ENCODE measurements at regions of chr6 and their contacts with region 1.

Region 1: DNA sequence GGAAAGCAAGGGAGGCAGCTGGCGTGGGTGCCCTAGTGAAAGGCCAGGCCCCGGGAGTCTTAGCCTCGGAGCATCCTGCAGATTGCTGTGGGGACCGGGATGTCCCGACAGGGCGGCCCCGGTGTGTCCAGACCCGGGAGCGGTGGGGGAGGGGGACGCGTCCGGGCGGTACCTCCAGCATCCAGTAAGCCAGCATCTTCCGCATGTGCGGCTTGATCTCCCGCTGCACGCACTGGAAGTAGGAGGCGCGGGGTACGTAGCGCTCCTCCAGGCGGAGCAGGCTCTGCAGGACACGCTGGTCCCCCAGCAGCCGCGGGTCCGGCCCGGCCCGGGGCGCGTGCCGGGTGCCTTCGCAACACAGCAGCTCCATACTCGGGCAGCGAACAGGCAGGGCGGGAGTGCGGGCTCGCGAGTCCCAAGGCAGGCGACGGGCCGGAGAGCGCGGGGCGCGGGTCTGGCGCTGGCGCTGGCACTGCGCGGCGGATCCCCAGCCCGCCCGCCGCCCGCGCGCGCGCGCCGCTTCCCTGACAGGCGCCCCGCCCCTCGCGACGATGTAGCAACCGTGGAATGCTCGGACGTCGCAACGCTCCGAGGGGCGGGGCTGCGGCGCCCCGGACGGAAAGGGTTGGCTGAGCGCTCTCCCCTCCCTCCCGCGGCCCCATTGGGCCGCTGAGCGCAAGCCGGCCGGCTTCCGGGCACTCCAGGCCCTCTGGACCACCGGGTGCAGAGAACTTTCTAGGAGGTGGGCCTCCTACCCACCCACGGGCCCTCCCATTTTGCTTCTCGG is at the start of gene CCND3:
- DNase-seq: peak; percentile 85
- ATAC-seq: peak; percentile 86
- H3K4me3 ChIP-seq: peak within 1 kb of the TSS; percentile 74 to 91 (median 75)
- H3K27ac ChIP-seq: no peak within 1 kb of the TSS
- H3K4me1 ChIP-seq: peaks cover 31% of the 10 kb centered on the region
- H3K27me3 ChIP-seq: no peaks in the 10 kb centered on the region
- CTCF ChIP-seq: no peak
- EP300 ChIP-seq: 0 out of 4 replicates have a peak, but pooled peaks of 1 of the 2 experiments have one; percentile 34
- POLR2A ChIP-seq: peak; percentile 49 to 50; a peak in 3 of 4 replicates
- RAD21 ChIP-seq: no peak
- total RNA-seq, gene CCND3: 6.9 and 7.2 TPM in 2 replicates

Region 2: GRCh38 chr6:41966961-41967311 is 25.5 kb after region 1 on chr6:
- CTCF ChIA-PET with region 1: no interaction called
- POLR2A ChIA-PET with region 1: no interaction called
- in situ Hi-C with region 1: no loop called
- intact Hi-C with region 1: loop called (anchors 2 kb)
- DNase-seq: peak; percentile 84
- ATAC-seq: peak; percentile 17; the same call in 1 of the 3 replicates
- H3K4me3 ChIP-seq: no peak overlapping the region
- H3K27ac ChIP-seq: no peak overlapping the region
- H3K4me1 ChIP-seq: peaks cover 45% of the 10 kb centered on the region
- H3K27me3 ChIP-seq: no peaks in the 10 kb centered on the region
- CTCF ChIP-seq: no peak
- EP300 ChIP-seq: no peak
- POLR2A ChIP-seq: no peak
- RAD21 ChIP-seq: no peak

Region 3: GRCh38 chr6:42136508-42137193 is 195.2 kb after region 1 on chr6:
- CTCF ChIA-PET with region 1: no interaction called
- POLR2A ChIA-PET with region 1: no interaction called
- in situ Hi-C with region 1: no loop called
- intact Hi-C with region 1: no loop called
- DNase-seq: peak; percentile 61
- ATAC-seq: peak; percentile 59
- H3K4me3 ChIP-seq: peak overlapping the region; percentile 24 to 64 (median 52)
- H3K27ac ChIP-seq: peak overlapping the region; percentile 60
- H3K4me1 ChIP-seq: peaks cover 75% of the 10 kb centered on the region
- H3K27me3 ChIP-seq: no peaks in the 10 kb centered on the region; a peak in 1 of 5 replicates
- CTCF ChIP-seq: peak; percentile 68
- EP300 ChIP-seq: peak in 1 of 2 experiments; percentile 58; a peak in 1 of 4 replicates
- POLR2A ChIP-seq: no peak
- RAD21 ChIP-seq: no peak

Region 4: DNA sequence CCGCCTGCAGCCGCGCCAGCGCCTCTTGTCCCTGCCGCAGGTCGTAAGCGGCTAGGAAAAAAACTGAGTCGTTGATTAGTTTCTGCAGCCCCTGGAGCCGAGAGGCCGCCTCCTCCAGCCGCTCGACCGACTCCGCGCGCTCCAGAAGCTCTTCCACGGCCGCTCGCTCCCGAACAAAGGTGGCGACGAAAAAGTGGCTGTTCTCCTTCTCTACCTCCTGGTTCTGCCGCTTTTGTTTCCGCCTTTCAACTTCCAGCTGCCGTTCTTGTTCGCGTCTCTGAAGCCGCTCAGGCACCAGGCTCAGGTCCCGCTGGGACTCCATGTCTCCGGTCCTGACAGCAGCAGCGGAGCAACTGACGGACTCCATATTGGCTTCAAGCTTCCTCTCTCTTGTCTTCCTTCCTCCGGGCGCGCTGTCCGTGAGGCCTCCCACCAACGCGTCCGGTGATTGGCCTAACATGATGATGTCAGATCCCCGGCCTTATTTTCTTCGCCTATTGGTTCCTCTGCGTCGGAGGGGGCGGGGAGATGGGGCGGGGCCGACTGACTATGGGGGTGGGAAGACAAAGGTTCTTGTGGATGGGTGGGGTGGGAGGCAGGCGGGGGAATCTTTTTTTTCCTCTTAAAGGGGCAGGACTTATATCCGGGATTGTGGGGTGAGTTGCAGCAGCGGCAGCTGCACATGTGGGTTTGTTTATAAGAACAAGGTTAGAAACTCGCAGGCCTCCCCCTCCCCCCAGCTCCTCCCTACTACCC is 804.4 kb after region 1 on chr6 and contains the start of gene TBCC:
- CTCF ChIA-PET with region 1: no interaction called
- POLR2A ChIA-PET with region 1: no interaction called
- in situ Hi-C with region 1: no loop called
- intact Hi-C with region 1: no loop called
- DNase-seq: peak; percentile 99
- ATAC-seq: peak; percentile 87
- H3K4me3 ChIP-seq: peak within 1 kb of the TSS; percentile 93 to 100 (median 99)
- H3K27ac ChIP-seq: peak within 1 kb of the TSS; percentile 93
- H3K4me1 ChIP-seq: peaks cover 44% of the 10 kb centered on the region
- H3K27me3 ChIP-seq: no peaks in the 10 kb centered on the region; a peak in 1 of 5 replicates
- CTCF ChIP-seq: no peak; the same call in 1 of the 2 replicates
- EP300 ChIP-seq: 0 out of 4 replicates have a peak, but pooled peaks of 1 of the 2 experiments have one; percentile 15
- POLR2A ChIP-seq: peak; percentile 97 to 100
- RAD21 ChIP-seq: 0 out of 2 replicates have a peak, but pooled peaks have one; percentile 4
- total RNA-seq, gene TBCC: 36.1 and 43.2 TPM in 2 replicates